Activated T-helper 1 cell treated with anti-CD3 and anti-CD28 coated beads, Interleukin-12 subunit alpha, Interleukin-12 subunit beta, Interleukin-2, Interleukin-4 antibody, amounts not matched to agents 30 ng/mL and 10 ng/mL and 1 ng/mL, durations not matched to agents 14 hours and 24 hours and 36 hours (primary cell): ENCODE measurements at regions of chr18 and their contacts with region 1.

Region 1: DNA sequence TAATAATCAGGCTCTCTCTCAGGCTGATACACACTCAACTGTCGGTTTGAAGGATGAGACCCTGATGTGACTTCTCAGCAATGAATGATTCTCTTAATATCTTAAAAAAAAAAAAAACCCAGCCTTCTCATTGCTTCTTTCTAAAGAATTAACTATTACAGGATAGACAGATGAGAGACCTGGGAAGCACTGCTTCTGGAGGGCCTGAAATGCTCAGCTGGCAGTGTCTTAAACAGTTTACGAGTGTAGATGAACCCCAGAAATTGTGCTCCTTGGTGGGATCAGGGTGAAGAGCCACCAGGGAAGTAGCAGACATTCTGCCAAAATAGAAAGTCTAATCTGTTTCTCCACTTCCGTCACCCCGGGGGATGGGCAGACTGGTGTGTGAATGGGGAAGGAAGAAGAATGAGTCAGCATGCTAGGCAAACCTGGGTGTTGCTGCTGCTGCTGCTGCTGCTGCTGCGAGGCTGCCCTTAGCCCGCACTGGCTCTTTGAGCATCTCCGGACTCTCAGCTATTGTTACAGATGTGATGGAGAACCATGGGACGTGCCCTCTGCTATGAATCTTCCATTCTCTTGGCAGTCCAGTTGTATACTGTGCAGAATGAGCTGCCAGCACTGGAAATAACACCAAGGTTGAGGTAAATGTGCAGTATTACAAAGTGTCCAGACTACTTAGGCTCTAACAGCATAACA is 158.4 kb downstream of the SETBP1 start:
- DNase-seq: peak; percentile 73
- H3K4me3 Mint-ChIP-seq: peak overlapping the region; percentile 40
- H3K27ac Mint-ChIP-seq: peak overlapping the region; percentile 59
- H3K4me1 Mint-ChIP-seq: peaks cover 56% of the 10 kb centered on the region
- H3K27me3 Mint-ChIP-seq: peaks cover 5% of the 10 kb centered on the region

Region 2: DNA sequence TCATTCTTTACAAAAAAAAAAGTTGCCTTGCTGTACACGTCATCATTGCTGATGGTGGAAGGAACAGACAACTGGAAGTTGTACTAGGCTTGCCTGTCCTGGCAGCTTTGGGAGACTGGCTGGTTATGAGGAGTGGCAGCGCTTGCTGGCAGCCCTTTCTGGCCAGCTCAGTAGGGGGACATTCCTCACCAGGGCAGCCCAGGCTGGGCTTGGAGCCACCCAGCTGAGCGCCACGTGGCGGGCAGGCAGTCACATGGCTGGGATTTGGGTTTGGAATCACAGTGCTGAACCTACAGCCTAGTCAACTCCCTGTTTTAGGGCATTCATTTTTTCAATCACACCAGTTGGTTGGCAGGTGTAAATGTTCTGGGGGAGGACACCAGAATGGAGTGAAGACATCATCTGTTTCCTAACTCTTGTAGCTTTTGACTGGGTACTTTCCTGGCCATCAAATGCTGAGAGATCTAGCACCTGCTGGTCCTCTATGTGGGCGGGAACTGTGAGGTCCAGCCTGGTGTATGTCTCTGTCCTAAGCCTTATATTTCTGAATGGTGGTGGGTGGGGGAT is 19.1 kb before region 1 on chr18:
- intact Hi-C with region 1: loop called (anchors 1 kb)
- DNase-seq: no peak
- H3K4me3 Mint-ChIP-seq: no peak overlapping the region
- H3K27ac Mint-ChIP-seq: no peak overlapping the region
- H3K4me1 Mint-ChIP-seq: peaks cover 19% of the 10 kb centered on the region
- H3K27me3 Mint-ChIP-seq: peaks cover 14% of the 10 kb centered on the region